Left cardiac atrium (tissue), 4 donors: ENCODE measurements at regions of chr19 and their contacts with region 1.

Region 1: DNA sequence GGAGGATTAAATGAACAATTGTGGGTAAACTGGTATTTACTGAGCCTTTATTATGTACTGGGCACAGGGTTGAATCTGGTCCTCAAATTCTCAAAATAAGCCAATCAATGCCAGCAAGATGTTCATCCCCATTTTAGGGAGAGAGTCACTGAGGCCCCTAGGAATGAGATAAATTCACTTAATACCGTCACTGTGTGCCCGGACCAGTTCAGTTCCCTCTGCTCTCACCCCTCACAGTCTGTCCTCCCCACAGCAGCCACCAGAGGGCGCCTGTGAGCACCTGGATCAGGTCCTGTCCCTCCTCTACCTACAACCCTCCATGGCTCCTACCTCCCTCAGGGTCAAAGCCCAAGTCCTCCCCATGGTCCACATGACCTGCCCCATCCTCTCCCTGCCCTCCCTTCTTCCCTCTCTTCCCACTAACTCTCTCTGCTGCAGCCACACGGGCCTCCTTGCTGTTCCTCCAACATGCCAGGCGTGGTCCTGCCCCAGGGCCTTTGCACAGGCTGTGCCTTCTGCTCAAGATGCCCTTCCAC is 42.0 kb upstream of the NFIC start:
- DNase-seq: peak; percentile 63
- ATAC-seq: peak in 1 of 2 donors; percentile 58

Region 2: GRCh38 chr19:3429581-3430080 is 105.2 kb after region 1 on chr19:
- intact Hi-C with region 1: loop called (anchors 5 to 10 kb)
- DNase-seq: peak; percentile 92
- ATAC-seq: peak; percentile 82 to 85

Region 3: GRCh38 chr19:3434712-3435553 is 110.5 kb after region 1 on chr19:
- intact Hi-C with region 1: loop called in 1 of 2 experiments (anchors 10 kb)
- DNase-seq: peak; percentile 98
- ATAC-seq: peak; percentile 96 to 99

Region 4: DNA sequence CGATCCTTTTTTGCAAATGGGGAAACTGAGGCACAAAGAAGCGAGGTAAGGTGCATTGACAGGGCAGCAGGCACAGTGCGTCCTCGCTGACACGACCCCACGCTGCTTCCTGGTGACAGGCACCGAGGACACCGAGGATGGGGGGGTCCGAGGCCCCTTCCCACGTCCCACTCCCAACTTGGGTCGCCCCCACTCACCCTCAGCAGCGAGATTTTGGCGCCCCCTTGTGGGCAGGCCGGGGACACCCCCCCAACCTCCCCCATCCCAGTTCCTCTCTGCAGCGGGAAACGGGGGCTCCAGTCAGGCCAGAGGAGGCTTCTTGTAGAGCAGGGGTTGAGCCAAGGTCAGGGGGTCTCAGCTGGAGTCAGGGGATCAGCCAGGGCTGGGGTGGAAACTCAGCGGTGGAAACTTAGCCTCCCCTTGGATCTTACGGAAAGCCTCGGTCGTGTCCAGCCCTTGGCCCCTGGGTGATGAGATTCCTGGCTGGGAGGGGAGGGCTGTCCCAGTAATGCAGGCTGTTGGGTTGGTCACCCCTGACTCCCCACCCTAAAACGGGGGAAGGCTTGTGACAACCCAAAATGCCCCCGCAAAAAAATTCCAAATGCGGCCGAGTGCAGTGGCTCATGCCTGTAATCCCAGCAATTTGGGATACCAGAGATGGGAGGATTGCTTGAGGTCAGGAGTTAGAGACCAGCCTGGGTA is 147.7 kb after region 1 on chr19:
- intact Hi-C with region 1: loop called (anchors 2 to 5 kb)
- DNase-seq: no peak
- ATAC-seq: peak; percentile 54 to 60

Region 5: DNA sequence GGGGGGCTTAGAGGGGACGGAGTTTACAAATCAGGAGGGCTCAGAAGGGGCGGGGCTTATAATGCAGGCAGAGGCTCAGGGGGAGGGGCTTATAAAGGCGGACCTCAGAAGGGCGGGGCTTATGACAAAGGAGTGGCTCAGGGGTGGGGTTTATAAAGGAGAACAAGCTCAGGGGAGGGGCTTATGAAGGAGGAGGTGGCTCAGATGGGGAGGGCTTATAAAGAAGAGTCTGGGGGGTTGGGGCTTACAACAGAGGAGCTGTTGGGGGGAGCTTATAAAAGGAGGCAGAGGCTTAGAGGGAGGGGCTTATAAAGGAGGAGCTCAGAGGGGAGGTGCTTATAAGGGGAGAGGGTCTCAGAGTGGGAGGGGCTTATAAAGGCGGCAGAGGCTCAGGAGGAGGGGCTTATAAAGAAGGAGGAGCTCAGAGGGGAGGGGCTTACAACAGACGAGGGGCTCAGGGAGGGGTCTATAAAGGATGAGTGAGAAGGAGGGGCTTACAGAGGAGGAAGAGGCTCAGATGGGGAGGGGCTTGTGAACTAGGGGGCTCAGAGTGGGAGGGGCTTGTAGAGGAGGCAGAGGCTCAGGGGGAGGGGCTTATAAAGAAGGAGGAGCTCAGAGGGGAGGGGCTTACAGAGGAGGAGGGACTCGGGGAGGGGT is 154.9 kb after region 1 on chr19:
- intact Hi-C with region 1: loop called (anchors 2 to 5 kb)
- DNase-seq: no peak
- ATAC-seq: peak in 1 of 2 donors; percentile 18